ENCODE measurements at regions of chr10 and their contacts with region 1.

Region 1: DNA sequence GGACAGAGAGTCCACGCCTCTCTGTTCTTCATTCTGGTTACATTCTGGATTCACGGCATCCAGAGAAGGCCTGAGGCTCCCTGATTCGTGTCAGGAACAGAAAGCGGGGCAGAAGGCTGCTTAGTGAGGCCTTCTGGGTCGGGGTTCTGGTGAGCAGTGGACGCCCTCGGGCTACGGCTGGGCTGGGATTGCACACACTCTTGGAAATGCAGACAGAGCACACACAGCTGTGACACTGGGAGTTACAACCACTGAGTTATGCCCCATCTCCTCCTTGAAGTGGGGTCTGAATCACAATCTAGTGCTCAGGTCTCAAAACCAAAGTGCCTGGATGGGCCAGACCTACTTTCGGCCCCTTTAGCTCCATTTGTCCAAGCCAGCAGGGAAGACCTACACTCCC is 156.9 kb upstream of the GDF10 start:
- DNase-seq: no peak
- ATAC-seq: no peak
- H3K4me3 ChIP-seq: no peak overlapping the region
- H3K27ac ChIP-seq: no peak overlapping the region
- H3K4me1 ChIP-seq: no peaks in the 10 kb centered on the region
- H3K27me3 ChIP-seq: peaks cover under 1% of the 10 kb centered on the region; the same call in 1 of the 2 replicates
- CTCF ChIP-seq: no peak

Region 2: GRCh38 chr10:47024399-47025252 is 118.4 kb before region 1 on chr10:
- CTCF ChIA-PET with region 1: no interaction called
- POLR2A ChIA-PET with region 1: no interaction called
- in situ Hi-C with region 1: no loop called
- intact Hi-C with region 1: no loop called
- DNase-seq: peak; percentile 68
- ATAC-seq: peak; percentile 93
- H3K4me3 ChIP-seq: no peak overlapping the region
- H3K27ac ChIP-seq: no peak overlapping the region
- H3K4me1 ChIP-seq: no peaks in the 10 kb centered on the region
- H3K27me3 ChIP-seq: no peaks in the 10 kb centered on the region
- CTCF ChIP-seq: peak; percentile 99

Region 3: GRCh38 chr10:47276576-47277351 is 133.7 kb after region 1 on chr10:
- CTCF ChIA-PET with region 1: no interaction called
- POLR2A ChIA-PET with region 1: interaction called, 10 read pairs
- in situ Hi-C with region 1: no loop called
- intact Hi-C with region 1: no loop called
- DNase-seq: no peak
- ATAC-seq: no peak
- H3K4me3 ChIP-seq: no peak overlapping the region
- H3K27ac ChIP-seq: no peak overlapping the region
- H3K4me1 ChIP-seq: no peaks in the 10 kb centered on the region
- H3K27me3 ChIP-seq: peaks cover 2% of the 10 kb centered on the region; the same call in 1 of the 2 replicates
- CTCF ChIP-seq: no peak

Region 4: GRCh38 chr10:47384148-47384921 is 241.3 kb after region 1 on chr10 and contains the start of gene ZNF488:
- CTCF ChIA-PET with region 1: no interaction called
- POLR2A ChIA-PET with region 1: no interaction called
- in situ Hi-C with region 1: no loop called
- intact Hi-C with region 1: no loop called
- DNase-seq: no peak
- ATAC-seq: peak; percentile 97
- H3K4me3 ChIP-seq: peak within 1 kb of the TSS; percentile 69
- H3K27ac ChIP-seq: peak within 1 kb of the TSS; percentile 91
- H3K4me1 ChIP-seq: peaks cover 17% of the 10 kb centered on the region
- H3K27me3 ChIP-seq: no peaks in the 10 kb centered on the region
- CTCF ChIP-seq: no peak
- total RNA-seq, gene ZNF488: 11.8 TPM

Measured in Panc1 (cell line).